CD14-positive monocyte (primary cell): ENCODE measurements at regions of chr18 and their contacts with region 1.

Region 1: DNA sequence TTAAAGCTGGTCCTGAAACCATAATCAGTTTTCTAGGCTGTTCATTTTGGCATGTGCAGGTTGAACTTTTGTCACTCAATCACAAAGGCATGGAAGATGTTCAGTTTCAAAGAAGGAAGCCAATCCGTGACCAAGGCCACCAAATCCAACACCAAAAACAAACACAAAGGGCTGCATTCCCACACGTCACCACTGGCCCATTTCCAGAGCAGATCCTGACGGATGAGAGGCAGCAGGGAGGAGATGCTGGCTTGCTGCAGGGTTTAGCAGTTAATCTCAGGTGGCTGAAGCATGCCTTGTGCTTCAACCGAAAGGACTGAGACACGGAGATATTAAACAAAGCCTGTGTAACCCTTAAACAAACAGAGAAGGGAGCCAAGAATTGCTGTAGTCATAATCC is 191.9 kb upstream of the CTAGE1 start:
- DNase-seq: no peak
- H3K4me3 ChIP-seq: no peak overlapping the region
- H3K4me3 Mint-ChIP-seq: no peak overlapping the region
- H3K27ac ChIP-seq: no peak overlapping the region
- H3K27ac Mint-ChIP-seq: no peak overlapping the region
- H3K4me1 ChIP-seq: no peaks in the 10 kb centered on the region
- H3K4me1 Mint-ChIP-seq: no peaks in the 10 kb centered on the region
- H3K27me3 ChIP-seq: no peaks in the 10 kb centered on the region
- H3K27me3 Mint-ChIP-seq: peaks cover 0 to 2% (median 0%) of the 10 kb centered on the region in 3 donors
- CTCF ChIP-seq: no peak

Region 2: DNA sequence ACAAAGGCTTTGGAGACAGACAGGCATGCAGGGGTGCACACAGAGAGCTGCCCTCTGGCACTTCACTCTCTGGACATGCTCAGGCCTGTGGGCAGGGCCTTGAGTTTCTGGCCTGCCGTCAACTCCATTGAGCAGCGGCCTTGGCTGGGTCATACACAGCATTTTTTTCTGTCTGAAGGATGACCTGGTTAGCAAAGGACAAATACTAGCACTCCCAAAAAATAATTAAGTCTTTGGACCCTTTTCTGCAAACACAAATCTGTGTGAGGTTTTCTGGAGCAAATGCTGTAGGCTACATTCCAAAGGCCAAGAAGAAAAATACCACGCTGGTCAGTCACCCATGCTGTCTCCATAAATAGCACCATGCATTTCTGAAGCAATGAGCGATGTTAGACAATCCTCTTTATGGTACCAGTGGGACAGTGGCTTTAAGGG is 67.2 kb before region 1 on chr18:
- intact Hi-C with region 1: loop called in 1 of 2 experiments (anchors 10 kb)
- DNase-seq: no peak
- H3K4me3 ChIP-seq: no peak overlapping the region
- H3K4me3 Mint-ChIP-seq: no peak overlapping the region
- H3K27ac ChIP-seq: no peak overlapping the region
- H3K27ac Mint-ChIP-seq: no peak overlapping the region
- H3K4me1 ChIP-seq: no peaks in the 10 kb centered on the region
- H3K4me1 Mint-ChIP-seq: no peaks in the 10 kb centered on the region
- H3K27me3 ChIP-seq: no peaks in the 10 kb centered on the region
- H3K27me3 Mint-ChIP-seq: peaks cover 0 to 1% (median 0%) of the 10 kb centered on the region in 3 donors
- CTCF ChIP-seq: no peak

Region 3: GRCh38 chr18:22921772-22922171 is 312.1 kb after region 1 on chr18:
- intact Hi-C with region 1: no loop called
- DNase-seq: no peak
- H3K4me3 ChIP-seq: no peak overlapping the region
- H3K4me3 Mint-ChIP-seq: no peak overlapping the region
- H3K27ac ChIP-seq: no peak overlapping the region
- H3K27ac Mint-ChIP-seq: no peak overlapping the region
- H3K4me1 ChIP-seq: no peaks in the 10 kb centered on the region
- H3K4me1 Mint-ChIP-seq: no peaks in the 10 kb centered on the region
- H3K27me3 ChIP-seq: no peaks in the 10 kb centered on the region
- H3K27me3 Mint-ChIP-seq: no peaks in the 10 kb centered on the region
- CTCF ChIP-seq: no peak

Region 4: DNA sequence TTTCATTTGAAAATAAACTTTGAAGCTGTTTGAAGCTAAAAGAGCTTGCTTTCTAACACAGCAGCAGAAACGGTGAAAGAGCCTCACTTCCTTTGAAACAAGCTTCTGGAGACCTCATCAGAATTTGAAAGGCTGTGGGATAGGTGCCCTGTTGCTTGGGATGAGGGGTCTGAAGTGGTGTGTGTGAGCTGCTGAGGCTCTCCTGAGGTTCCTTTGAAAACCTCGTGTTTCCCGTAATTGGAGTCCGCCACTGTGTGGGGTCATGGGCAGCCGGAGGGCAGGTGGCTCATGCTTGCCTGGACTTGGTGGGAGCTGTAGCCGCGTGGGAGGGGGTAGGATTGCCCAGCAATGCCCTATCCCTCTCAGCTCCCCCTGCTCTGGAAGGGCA is 560.0 kb after region 1 on chr18:
- intact Hi-C with region 1: no loop called
- DNase-seq: no peak
- H3K4me3 ChIP-seq: no peak overlapping the region
- H3K4me3 Mint-ChIP-seq: no peak overlapping the region
- H3K27ac ChIP-seq: no peak overlapping the region
- H3K27ac Mint-ChIP-seq: no peak overlapping the region
- H3K4me1 ChIP-seq: no peaks in the 10 kb centered on the region
- H3K4me1 Mint-ChIP-seq: no peaks in the 10 kb centered on the region
- H3K27me3 ChIP-seq: no peaks in the 10 kb centered on the region
- H3K27me3 Mint-ChIP-seq: peaks cover 0 to 2% (median 0%) of the 10 kb centered on the region in 3 donors
- CTCF ChIP-seq: no peak